ENCODE measurements at regions of chr2 and their contacts with region 1.

Region 1: DNA sequence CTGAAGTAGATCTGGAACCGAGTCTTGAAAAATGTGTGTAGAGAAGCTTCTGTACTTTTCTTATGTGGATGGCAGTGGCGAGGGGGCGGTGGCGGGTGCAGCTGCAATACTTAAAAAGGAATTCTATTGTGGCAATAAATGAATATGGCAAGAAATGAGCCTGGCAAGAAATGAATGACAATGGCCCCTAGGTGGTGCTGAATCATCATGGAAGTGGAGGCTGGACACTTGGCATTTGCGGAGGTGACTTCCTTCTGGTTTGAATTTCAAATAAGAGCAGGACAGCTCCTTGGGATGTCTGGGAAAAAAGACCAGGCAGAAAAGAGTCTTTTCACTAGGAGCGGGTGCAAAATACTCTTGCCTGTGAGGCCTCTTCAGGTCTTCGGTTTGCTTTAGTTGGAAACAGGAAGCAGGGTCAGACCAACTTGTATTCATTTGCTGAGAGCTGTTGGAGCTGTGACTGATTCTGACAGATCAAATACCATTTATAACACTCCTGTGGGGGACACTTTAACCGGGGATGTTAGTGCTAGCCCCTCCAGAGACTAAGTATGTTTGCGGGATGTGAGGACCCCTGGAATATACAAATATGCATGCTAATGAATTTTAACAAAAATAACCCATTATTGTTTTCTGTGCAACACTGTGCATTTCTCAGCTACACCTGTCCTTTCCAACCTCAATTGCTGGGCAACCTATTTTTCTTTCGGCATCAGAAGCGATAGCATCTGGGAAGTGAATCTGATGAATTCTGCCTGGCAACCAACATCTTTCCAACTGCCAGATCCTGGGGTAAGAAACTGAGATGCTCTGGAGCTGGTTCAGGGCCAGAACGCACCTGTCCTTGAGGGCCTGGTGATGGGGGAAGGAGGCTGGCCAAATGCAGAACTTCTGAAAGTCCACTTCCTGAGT is 35.4 kb downstream of the FASTKD2 start:
- DNase-seq: peak; percentile 47 to 57
- ATAC-seq: peak; percentile 46 to 80 (median 65)
- H3K4me3 ChIP-seq: no peak overlapping the region
- H3K27ac ChIP-seq: no peak overlapping the region
- H3K4me1 ChIP-seq: peaks cover 8% of the 10 kb centered on the region
- H3K27me3 ChIP-seq: no peaks in the 10 kb centered on the region
- CTCF ChIP-seq: peak; percentile 57

Region 2: GRCh38 chr2:206920951-206921350 is 120.2 kb after region 1 on chr2:
- intact Hi-C with region 1: no loop called
- DNase-seq: no peak
- ATAC-seq: no peak
- H3K4me3 ChIP-seq: no peak overlapping the region
- H3K27ac ChIP-seq: no peak overlapping the region
- H3K4me1 ChIP-seq: no peaks in the 10 kb centered on the region
- H3K27me3 ChIP-seq: no peaks in the 10 kb centered on the region
- CTCF ChIP-seq: no peak

Region 3: GRCh38 chr2:206971805-206972204 is 171.0 kb after region 1 on chr2:
- intact Hi-C with region 1: loop called in 1 of 2 experiments (anchors 10 kb)
- DNase-seq: peak; percentile 44 to 58
- ATAC-seq: peak in 2 of 4 donors; percentile 32 to 63
- H3K4me3 ChIP-seq: no peak overlapping the region
- H3K27ac ChIP-seq: no peak overlapping the region
- H3K4me1 ChIP-seq: peaks cover 3% of the 10 kb centered on the region
- H3K27me3 ChIP-seq: no peaks in the 10 kb centered on the region
- CTCF ChIP-seq: no peak

Region 4: GRCh38 chr2:207166039-207166348 is 365.2 kb after region 1 on chr2:
- intact Hi-C with region 1: loop called in 1 of 2 experiments (anchors 10 kb)
- DNase-seq: peak; percentile 98 to 99
- ATAC-seq: peak; percentile 90 to 97 (median 96)
- H3K4me3 ChIP-seq: peak overlapping the region; percentile 88
- H3K27ac ChIP-seq: peak overlapping the region; percentile 100
- H3K4me1 ChIP-seq: peaks cover 25% of the 10 kb centered on the region
- H3K27me3 ChIP-seq: no peaks in the 10 kb centered on the region
- CTCF ChIP-seq: no peak